Left ventricle myocardium inferior (tissue), 1 donor: ENCODE measurements at regions of chr1 and their contacts with region 1.

Region 1: GRCh38 chr1:77725706-77726105 is 33.9 kb downstream of the USP33 start:
- DNase-seq: no peak
- H3K4me3 ChIP-seq: no peak overlapping the region
- H3K27ac ChIP-seq: no peak overlapping the region
- H3K4me1 ChIP-seq: peaks cover 6% of the 10 kb centered on the region
- H3K27me3 ChIP-seq: no peaks in the 10 kb centered on the region
- CTCF ChIP-seq: no peak

Region 2: DNA sequence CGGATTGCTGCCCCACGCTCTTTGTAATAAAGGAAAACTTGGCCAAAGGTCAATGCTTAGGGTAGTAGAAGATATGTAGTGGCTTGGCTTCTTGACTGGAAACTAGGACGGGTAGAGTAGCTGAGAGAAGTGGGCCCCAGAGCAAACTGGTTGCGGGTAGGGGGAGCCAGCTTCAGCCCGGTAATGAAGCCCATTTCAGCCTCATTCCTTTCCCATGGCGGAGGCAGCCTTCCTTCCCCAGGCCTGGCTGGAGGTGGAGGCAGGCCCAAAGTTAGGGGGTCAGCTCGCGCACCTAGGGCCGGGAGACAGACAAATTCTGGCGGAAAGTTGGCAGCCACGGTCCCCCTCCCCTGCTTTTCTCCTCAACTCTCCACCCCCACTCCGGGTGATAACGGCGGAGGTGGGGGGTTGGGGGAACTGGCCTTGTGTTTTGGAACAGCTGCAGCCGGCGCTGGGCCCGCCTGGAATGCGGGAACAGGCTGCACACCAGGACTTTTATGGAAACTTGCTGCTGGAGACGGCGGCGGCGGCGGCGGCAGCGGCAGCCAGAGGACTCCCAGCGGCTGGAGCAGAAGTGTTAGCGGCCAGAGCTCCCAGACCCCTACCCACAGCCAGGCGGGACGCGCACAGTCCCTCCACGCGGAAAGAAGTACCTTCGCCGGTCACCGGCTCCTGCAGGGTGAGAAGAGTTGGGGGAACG is 162.5 kb after region 1 on chr1 and contains the start of gene NEXN:
- intact Hi-C with region 1: no loop called
- DNase-seq: peak; percentile 90
- H3K4me3 ChIP-seq: peak within 1 kb of the TSS; percentile 85
- H3K27ac ChIP-seq: peak within 1 kb of the TSS; percentile 98
- H3K4me1 ChIP-seq: peaks cover 31% of the 10 kb centered on the region
- H3K27me3 ChIP-seq: no peaks in the 10 kb centered on the region
- CTCF ChIP-seq: no peak
- total RNA-seq, gene NEXN: 391 TPM

Region 3: DNA sequence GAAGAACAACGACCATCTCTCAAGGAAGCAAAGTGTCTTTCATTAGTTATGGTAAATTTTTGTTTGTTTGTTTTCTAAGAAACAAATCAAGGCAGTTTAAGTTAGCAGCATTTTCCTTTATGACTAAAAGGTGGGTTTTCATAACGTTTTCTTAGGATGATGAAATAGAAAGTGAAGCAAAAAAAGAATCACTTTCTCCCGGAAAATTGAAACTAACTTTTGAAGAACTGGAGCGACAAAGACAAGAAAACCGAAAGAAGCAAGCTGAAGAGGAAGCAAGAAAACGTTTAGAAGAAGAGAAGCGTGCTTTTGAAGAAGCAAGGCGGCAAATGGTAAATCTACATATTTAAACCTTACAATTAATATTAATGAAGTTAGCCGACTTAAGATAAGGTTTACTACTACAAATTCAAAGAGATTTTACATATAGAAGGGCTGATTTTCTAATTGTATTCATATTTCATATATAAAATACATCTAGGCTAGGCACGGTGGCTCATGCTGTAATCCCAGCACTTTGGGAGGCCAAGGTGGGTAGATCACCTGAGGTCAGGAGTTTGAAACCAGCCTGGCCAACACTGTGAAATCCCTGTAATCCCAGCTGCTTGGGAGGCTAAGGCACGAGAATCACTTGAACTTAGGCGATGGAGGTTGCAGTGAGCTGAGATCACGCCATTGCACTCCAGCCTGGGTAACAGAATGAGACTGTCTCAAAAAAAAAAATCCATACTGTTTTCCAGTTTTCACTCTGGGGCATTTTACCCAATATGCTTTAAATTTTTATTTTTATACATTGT is 201.1 kb after region 1 on chr1:
- intact Hi-C with region 1: no loop called
- DNase-seq: no peak
- H3K4me3 ChIP-seq: peak overlapping the region; percentile 34
- H3K27ac ChIP-seq: peak overlapping the region; percentile 21
- H3K4me1 ChIP-seq: peaks cover 13% of the 10 kb centered on the region
- H3K27me3 ChIP-seq: no peaks in the 10 kb centered on the region
- CTCF ChIP-seq: no peak

Region 4: GRCh38 chr1:77948841-77949424 is 223.2 kb after region 1 on chr1:
- intact Hi-C with region 1: loop called (anchors 10 kb)
- DNase-seq: no peak
- H3K4me3 ChIP-seq: no peak overlapping the region
- H3K27ac ChIP-seq: peak overlapping the region; percentile 1
- H3K4me1 ChIP-seq: peaks cover 39% of the 10 kb centered on the region
- H3K27me3 ChIP-seq: no peaks in the 10 kb centered on the region
- CTCF ChIP-seq: peak; percentile 44